B cell (primary cell): ENCODE measurements at regions of chr1 and their contacts with region 1.

Region 1: DNA sequence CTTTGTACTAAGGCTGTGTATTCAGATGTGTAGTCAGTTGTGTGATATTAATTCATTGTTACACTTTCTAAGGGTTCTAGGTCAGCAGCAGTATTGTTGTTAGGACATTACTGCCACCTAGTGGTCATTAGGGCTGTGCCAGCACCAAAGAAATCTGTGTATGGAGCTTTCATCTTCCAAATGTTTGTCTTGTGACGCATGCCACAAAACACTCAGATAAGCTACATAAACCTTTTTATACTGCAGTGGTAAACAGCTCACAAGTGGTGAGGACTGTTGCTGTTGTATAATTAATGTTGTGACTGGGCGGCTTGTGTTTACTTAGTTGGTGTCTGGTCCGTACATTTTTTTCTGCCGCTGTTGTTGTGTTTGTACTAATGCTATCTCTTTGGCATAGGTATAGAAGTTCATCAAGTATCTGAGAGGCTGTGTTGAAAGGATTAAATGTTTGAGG is 51.7 kb downstream of the S1PR1 start:
- DNase-seq: peak; percentile 83
- ATAC-seq: peak; percentile 85
- H3K4me3 ChIP-seq: no peak overlapping the region
- H3K4me3 Mint-ChIP-seq: no peak overlapping the region
- H3K27ac ChIP-seq: no peak overlapping the region
- H3K27ac Mint-ChIP-seq: peak overlapping the region; percentile 47
- H3K4me1 ChIP-seq: peaks cover 24 to 42% of the 10 kb centered on the region in 2 donors
- H3K4me1 Mint-ChIP-seq: peaks cover 34% of the 10 kb centered on the region
- H3K27me3 ChIP-seq: no peaks in the 10 kb centered on the region
- H3K27me3 Mint-ChIP-seq: no peaks in the 10 kb centered on the region
- CTCF ChIP-seq: peak; percentile 93

Region 2: GRCh38 chr1:100921109-100921706 is 367.3 kb before region 1 on chr1:
- CTCF ChIA-PET with region 1: interaction called, 190 read pairs
- POLR2A ChIA-PET with region 1: interaction called, 4 read pairs
- intact Hi-C with region 1: loop called (anchors 1 kb)
- DNase-seq: peak; percentile 74
- ATAC-seq: peak; percentile 47
- H3K4me3 ChIP-seq: no peak overlapping the region
- H3K4me3 Mint-ChIP-seq: no peak overlapping the region
- H3K27ac ChIP-seq: no peak overlapping the region
- H3K27ac Mint-ChIP-seq: no peak overlapping the region
- H3K4me1 ChIP-seq: peaks cover 0 to 7% of the 10 kb centered on the region in 2 donors
- H3K4me1 Mint-ChIP-seq: peaks cover 17% of the 10 kb centered on the region
- H3K27me3 ChIP-seq: no peaks in the 10 kb centered on the region
- H3K27me3 Mint-ChIP-seq: no peaks in the 10 kb centered on the region
- CTCF ChIP-seq: peak; percentile 93

Region 3: GRCh38 chr1:100972185-100972584 is 316.3 kb before region 1 on chr1:
- CTCF ChIA-PET with region 1: interaction called, 10 read pairs
- POLR2A ChIA-PET with region 1: no interaction called
- intact Hi-C with region 1: no loop called
- DNase-seq: no peak
- ATAC-seq: no peak
- H3K4me3 ChIP-seq: no peak overlapping the region
- H3K4me3 Mint-ChIP-seq: no peak overlapping the region
- H3K27ac ChIP-seq: peak overlapping the region in 1 of 2 donors; percentile 17
- H3K27ac Mint-ChIP-seq: no peak overlapping the region
- H3K4me1 ChIP-seq: peaks cover 15 to 18% of the 10 kb centered on the region in 2 donors
- H3K4me1 Mint-ChIP-seq: peaks cover 20% of the 10 kb centered on the region
- H3K27me3 ChIP-seq: no peaks in the 10 kb centered on the region
- H3K27me3 Mint-ChIP-seq: no peaks in the 10 kb centered on the region
- CTCF ChIP-seq: no peak

Region 4: DNA sequence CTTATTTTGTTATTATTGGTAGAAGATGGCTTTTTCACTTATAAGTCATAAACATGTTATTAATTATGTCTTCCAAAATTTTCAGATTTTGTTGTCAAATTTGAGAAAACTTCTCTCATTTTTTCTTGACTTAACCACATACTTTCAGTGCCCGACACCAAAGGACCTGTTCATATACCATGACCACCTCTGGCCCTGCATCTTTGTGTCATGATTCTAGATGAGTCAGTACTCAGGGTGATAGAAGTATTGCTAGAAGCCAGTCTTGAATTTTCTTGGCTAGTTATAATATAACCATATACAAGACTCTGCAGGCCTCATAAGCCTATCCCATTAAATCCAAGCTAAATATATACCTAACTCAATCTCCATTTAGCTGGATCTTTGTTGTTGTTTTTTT is 227.5 kb before region 1 on chr1:
- CTCF ChIA-PET with region 1: interaction called, 11 read pairs
- POLR2A ChIA-PET with region 1: no interaction called
- intact Hi-C with region 1: no loop called
- DNase-seq: no peak
- ATAC-seq: no peak
- H3K4me3 ChIP-seq: no peak overlapping the region
- H3K4me3 Mint-ChIP-seq: no peak overlapping the region
- H3K27ac ChIP-seq: no peak overlapping the region
- H3K27ac Mint-ChIP-seq: no peak overlapping the region
- H3K4me1 ChIP-seq: peaks cover 33 to 38% of the 10 kb centered on the region in 2 donors
- H3K4me1 Mint-ChIP-seq: peaks cover 52% of the 10 kb centered on the region
- H3K27me3 ChIP-seq: no peaks in the 10 kb centered on the region
- H3K27me3 Mint-ChIP-seq: no peaks in the 10 kb centered on the region
- CTCF ChIP-seq: no peak

Region 5: GRCh38 chr1:101136739-101137138 is 151.8 kb before region 1 on chr1:
- CTCF ChIA-PET with region 1: interaction called, 183 read pairs
- POLR2A ChIA-PET with region 1: interaction called, 3 read pairs
- intact Hi-C with region 1: loop called (anchors 1 kb)
- DNase-seq: peak; percentile 54
- ATAC-seq: peak; percentile 70
- H3K4me3 ChIP-seq: no peak overlapping the region
- H3K4me3 Mint-ChIP-seq: peak overlapping the region; percentile 17
- H3K27ac ChIP-seq: peak overlapping the region; percentile 1 to 32
- H3K27ac Mint-ChIP-seq: peak overlapping the region; percentile 70
- H3K4me1 ChIP-seq: peaks cover 38 to 40% of the 10 kb centered on the region in 2 donors
- H3K4me1 Mint-ChIP-seq: peaks cover 49% of the 10 kb centered on the region
- H3K27me3 ChIP-seq: no peaks in the 10 kb centered on the region
- H3K27me3 Mint-ChIP-seq: no peaks in the 10 kb centered on the region
- CTCF ChIP-seq: no peak

Region 6: GRCh38 chr1:101203820-101204540 is 84.5 kb before region 1 on chr1:
- CTCF ChIA-PET with region 1: no interaction called
- POLR2A ChIA-PET with region 1: no interaction called
- intact Hi-C with region 1: no loop called
- DNase-seq: no peak
- ATAC-seq: no peak
- H3K4me3 ChIP-seq: no peak overlapping the region
- H3K4me3 Mint-ChIP-seq: no peak overlapping the region
- H3K27ac ChIP-seq: no peak overlapping the region
- H3K27ac Mint-ChIP-seq: no peak overlapping the region
- H3K4me1 ChIP-seq: peaks cover 5 to 6% of the 10 kb centered on the region in 2 donors
- H3K4me1 Mint-ChIP-seq: peaks cover 8% of the 10 kb centered on the region
- H3K27me3 ChIP-seq: no peaks in the 10 kb centered on the region
- H3K27me3 Mint-ChIP-seq: no peaks in the 10 kb centered on the region
- CTCF ChIP-seq: no peak

Region 7: DNA sequence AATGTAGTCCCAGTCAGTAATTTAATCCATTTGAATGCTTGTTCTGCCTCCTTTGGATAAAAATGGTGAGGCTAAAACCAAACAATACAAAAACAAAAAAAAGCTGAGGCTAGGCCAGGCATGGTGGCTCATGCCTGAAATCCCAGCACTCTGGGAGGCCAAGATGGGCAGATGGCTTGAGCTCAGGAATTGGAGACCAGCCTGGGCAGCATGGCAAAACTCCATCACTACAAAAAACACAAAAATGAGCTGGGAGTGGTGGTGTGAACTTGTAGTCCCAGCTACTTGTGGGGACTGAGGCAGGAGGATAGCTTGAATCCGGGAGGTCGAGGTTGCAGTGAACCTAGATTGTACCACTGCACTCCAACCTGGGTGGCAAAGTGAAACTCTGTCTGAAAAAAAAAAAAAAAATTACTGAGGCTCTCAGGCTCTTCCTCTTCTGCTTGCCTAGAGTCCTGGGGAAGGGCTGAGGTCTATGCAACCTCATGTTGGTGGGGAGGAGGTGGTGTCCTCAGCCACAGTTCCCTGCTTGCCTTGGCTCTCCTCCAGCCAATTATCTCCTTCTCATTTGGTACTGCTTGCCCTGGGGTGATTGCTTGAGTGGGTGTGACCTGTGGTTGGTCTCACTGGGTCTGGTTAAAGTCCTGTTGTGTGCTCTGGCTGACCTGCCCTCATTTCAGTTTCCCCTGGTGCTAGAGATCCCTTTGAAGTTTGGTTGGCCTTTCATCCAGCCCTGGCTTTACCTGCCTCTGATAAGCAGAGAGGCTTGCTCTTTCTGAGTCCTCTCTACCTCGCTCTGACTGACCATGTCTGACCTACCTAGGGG is 30.8 kb before region 1 on chr1:
- CTCF ChIA-PET with region 1: interaction called, 38 read pairs
- POLR2A ChIA-PET with region 1: interaction called, 3 read pairs
- intact Hi-C with region 1: no loop called
- DNase-seq: peak; percentile 57
- ATAC-seq: peak; percentile 74
- H3K4me3 ChIP-seq: no peak overlapping the region
- H3K4me3 Mint-ChIP-seq: peak overlapping the region; percentile 32
- H3K27ac ChIP-seq: peak overlapping the region in 1 of 2 donors; percentile 20
- H3K27ac Mint-ChIP-seq: peak overlapping the region; percentile 59
- H3K4me1 ChIP-seq: peaks cover 27 to 32% of the 10 kb centered on the region in 2 donors
- H3K4me1 Mint-ChIP-seq: peaks cover 46% of the 10 kb centered on the region
- H3K27me3 ChIP-seq: no peaks in the 10 kb centered on the region
- H3K27me3 Mint-ChIP-seq: no peaks in the 10 kb centered on the region
- CTCF ChIP-seq: no peak

Region 8: DNA sequence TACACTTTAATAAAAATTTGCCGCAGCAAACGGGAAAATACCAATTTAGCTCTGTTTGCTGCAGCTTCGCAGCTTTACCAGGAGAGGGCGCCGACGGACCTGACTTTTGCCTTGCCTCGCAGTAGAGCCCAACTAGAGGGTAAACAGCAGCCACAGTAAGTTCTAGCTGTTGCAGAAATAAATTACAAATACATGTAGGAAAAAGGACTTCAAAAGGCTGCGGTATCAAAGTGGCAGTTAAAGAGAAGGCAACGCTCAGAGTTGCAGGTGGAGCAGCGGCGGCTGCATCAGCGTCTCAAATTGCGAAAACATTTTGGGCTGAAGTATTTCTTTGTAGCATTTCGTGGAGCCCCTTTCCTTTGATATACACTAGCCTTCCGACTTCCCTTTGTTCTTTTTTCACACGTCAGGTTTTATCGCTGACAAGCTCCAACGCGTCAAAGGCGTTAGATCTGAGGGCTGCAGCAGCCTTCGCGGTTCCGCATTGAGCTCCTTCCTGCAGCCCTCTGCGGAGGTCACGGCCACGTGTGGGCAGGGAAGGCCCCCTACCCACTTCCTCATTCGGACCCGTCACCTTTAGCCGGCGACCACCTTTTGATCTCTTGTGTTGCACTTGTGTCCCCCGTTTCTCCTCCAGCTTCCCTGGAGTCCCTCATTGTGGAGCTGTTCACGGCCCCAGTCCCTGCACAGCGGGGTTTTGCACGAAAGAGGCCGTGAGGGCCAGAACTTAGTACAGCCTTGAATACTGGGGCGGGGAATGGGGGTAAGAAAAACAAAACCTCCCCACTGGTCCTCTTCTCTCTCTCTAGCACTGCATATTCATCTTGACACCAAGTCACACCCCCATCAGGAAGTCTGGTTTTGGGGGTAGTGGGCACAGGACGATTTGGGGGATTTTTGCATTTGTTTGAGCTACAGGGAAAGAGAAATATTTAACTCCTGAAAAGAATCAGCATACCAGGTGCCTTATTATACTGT is 21.1 kb after region 1 on chr1:
- CTCF ChIA-PET with region 1: interaction called, 25 read pairs
- POLR2A ChIA-PET with region 1: no interaction called
- intact Hi-C with region 1: no loop called
- DNase-seq: peak; percentile 87
- ATAC-seq: peak; percentile 75
- H3K4me3 ChIP-seq: peak overlapping the region; percentile 23 to 60 (median 43)
- H3K4me3 Mint-ChIP-seq: peak overlapping the region; percentile 86
- H3K27ac ChIP-seq: peak overlapping the region; percentile 86 to 97
- H3K27ac Mint-ChIP-seq: peak overlapping the region; percentile 91
- H3K4me1 ChIP-seq: peaks cover 58 to 67% of the 10 kb centered on the region in 2 donors
- H3K4me1 Mint-ChIP-seq: peaks cover 75% of the 10 kb centered on the region
- H3K27me3 ChIP-seq: no peaks in the 10 kb centered on the region
- H3K27me3 Mint-ChIP-seq: no peaks in the 10 kb centered on the region
- CTCF ChIP-seq: peak; percentile 78